Heart right ventricle (tissue), 16 donors: ENCODE measurements at regions of chr12 and their contacts with region 1.

Region 1: DNA sequence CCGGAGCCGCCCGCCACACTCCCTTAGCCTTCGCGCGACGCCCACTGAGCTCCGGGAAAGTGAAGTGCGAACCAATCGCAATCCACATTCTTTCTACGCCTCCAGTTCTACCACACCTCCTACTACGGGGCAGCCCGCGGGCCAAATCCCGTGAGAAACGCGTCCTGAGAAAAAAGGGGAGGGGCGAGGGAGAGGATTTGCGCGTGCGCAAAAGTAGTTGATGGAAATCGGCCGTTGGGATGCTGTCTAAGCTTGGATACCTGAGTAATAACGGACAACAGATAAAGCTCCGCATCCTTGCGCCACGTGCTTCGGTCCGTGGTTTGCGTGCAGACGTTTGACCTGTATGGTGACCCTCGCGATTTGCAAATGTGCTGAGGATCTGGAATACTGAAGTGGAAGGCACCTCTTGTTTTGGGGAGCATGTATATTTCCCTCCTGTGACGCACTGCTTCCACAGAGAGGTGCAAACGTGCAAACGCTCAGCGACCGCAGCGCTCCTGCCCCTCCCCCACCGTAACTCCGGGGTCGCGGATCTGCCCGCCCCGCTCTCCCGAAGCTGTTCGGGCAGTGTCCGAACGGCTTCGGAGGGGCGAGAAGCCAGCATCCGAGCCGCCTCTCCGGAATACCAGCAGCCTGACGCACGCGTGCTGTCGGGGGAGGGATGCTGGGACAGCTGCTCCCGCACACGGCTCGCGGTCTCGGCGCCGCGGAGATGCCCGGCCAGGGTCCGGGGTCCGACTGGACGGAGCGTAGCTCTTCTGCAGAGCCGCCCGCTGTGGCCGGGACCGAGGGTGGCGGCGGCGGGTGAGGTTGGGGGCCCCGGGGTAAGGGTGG is at the starts of genes FAM216A and GPN3:
- DNase-seq: peak; percentile 95 to 98
- ATAC-seq: peak; percentile 94 to 97 (median 96)
- H3K4me3 ChIP-seq: peak within 1 kb of the TSS; percentile 56 to 90 (median 77)
- H3K27ac ChIP-seq: peak within 1 kb of the TSS; percentile 62 to 96 (median 88)
- H3K4me1 ChIP-seq: peaks cover 7 to 28% (median 24%) of the 10 kb centered on the region in 9 donors
- H3K27me3 ChIP-seq: no peaks in the 10 kb centered on the region
- CTCF ChIP-seq: no peak
- total RNA-seq, gene FAM216A: 2.4 to 9.2 (median 5.4) TPM
- total RNA-seq, gene GPN3: 25.3 to 37.5 (median 31.1) TPM

Region 2: DNA sequence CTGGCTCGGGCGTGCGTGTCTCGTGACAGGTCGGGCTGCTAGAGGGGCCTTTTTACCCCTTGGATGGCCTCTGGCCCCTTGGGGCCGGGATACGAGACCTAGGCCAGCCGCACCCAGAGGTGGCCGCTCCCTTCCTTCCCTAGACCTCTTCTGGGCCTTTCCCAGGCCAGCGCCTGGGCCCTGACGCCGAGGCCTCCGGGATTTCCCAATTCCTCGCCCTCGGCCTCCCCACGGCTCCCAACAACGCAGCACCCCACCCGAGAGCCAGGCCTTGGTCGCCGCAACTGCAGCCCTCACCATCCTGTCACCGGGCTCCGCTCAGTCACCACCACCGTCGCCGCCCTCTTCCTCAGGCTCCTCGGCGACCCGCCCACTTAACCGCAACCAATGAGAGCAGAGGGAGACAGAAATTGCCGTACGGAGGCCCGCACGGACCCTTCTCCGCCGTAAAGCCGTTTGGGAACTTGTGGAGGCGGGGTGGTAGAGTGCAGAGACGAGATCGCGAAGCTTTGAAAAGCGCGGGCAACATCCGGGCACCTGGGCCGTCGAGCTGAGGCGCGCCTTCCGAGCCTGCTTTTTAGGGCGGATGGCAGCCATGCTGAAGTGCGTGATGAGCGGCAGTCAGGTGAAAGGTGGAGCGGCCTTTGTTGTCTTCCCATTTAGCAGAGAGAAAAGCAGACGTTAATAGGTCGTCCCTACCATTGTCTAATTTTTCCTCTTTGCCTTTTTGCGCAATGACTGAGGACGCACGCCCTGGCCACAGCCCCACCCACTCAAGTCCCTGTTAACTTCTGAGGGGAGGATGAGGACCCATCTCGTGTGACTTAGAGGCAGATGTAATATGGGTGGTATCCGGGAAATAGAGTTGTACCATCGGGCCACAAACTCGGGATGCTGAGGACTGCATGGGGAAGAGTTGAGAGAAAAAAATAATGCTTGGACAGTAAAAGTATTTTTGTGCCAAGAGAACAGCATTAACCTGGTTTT is 33.6 kb after region 1 on chr12 and contains the starts of genes RAD9B and VPS29:
- intact Hi-C with region 1: loop called in 7 of 10 experiments (anchors 2 to 5 kb)
- DNase-seq: peak; percentile 98 to 99
- ATAC-seq: peak; percentile 97 to 100 (median 99)
- H3K4me3 ChIP-seq: peak within 1 kb of the TSS; percentile 70 to 98 (median 85)
- H3K27ac ChIP-seq: peak within 1 kb of the TSS; percentile 59 to 95 (median 91)
- H3K4me1 ChIP-seq: peaks cover 0 to 40% (median 35%) of the 10 kb centered on the region in 9 donors
- H3K27me3 ChIP-seq: no peaks in the 10 kb centered on the region
- CTCF ChIP-seq: no peak
- total RNA-seq, gene RAD9B: 0.23 to 1.6 (median 0.95) TPM
- total RNA-seq, gene VPS29: 83.7 to 117 (median 91.5) TPM

Region 3: DNA sequence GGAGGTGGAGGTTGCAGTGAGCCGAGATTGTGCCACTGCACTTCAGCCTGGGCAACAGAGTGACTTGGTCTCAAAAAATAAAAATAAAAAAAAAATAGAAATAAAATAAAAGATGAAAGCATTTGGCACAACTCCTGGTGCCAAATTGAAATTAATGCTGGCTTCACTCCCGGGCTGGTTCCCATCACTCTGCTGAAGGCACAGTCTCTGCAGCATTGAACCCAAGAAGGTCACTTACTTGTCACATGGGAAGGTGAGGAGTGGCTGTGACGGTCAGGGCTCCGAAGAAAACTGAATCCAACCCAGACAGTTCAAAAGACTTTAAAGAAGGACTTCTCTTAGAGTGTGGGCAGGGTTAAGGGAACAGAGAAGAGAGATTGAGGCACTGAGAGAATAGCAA is 367.9 kb after region 1 on chr12:
- intact Hi-C with region 1: no loop called
- DNase-seq: no peak
- ATAC-seq: peak in 1 of 8 donors; percentile 29
- H3K4me3 ChIP-seq: no peak overlapping the region
- H3K27ac ChIP-seq: no peak overlapping the region
- H3K4me1 ChIP-seq: no peaks in the 10 kb centered on the region
- H3K27me3 ChIP-seq: no peaks in the 10 kb centered on the region
- CTCF ChIP-seq: no peak